Posterior cingulate gyrus (tissue), 11 donors: ENCODE measurements at regions of chr2 and their contacts with region 1.

Region 1: DNA sequence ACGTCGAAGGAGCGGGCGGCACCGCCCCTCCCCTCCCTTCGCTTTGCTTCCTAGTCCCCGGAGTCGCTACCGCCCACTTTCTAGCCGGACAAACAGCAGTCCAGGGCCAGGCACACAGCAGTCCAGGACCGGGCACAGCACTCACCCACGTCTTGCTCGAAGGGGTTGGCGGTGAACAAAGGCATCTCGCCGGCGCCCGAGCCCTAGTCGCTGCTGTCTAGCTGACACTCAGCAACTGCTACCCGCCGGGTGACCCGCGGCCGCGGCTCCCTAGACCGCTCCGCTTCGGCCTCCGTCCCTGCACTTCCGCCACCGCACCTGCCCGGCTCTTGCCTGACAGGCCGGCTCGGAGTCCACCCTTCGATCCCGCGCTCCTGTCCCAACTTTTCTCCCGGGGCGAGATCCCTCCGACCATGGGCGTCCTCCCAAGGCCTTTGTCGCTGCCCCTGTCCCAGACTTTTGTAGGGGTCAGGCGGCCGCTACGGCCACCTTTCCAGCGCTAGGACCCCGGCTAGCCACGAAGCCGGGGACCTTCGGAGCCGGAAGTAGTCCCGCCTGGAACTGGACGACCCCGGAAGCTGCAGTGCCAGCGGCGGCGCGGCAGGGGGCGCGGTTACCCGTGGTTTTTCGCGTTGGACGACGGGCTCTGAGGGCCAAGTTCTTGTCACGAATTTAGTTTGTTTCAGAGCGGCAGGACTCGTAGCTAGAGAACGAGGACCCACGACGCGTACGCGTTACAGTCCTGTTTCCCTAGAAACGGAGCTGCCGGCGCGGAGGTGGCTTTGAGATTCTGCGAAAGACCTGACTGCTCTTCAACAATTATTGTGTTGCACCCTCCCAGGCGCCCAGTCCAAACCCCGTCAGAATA is at the start of gene STAM2:
- DNase-seq: peak; percentile 82 to 99 (median 91)

Region 2: GRCh38 chr2:152036611-152037469 is 138.9 kb before region 1 on chr2:
- intact Hi-C with region 1: loop called (anchors 1 kb)
- DNase-seq: peak; percentile 29 to 94 (median 74)

Region 3: GRCh38 chr2:152115952-152116351 is 59.7 kb before region 1 on chr2:
- intact Hi-C with region 1: no loop called
- DNase-seq: no peak

Region 4: DNA sequence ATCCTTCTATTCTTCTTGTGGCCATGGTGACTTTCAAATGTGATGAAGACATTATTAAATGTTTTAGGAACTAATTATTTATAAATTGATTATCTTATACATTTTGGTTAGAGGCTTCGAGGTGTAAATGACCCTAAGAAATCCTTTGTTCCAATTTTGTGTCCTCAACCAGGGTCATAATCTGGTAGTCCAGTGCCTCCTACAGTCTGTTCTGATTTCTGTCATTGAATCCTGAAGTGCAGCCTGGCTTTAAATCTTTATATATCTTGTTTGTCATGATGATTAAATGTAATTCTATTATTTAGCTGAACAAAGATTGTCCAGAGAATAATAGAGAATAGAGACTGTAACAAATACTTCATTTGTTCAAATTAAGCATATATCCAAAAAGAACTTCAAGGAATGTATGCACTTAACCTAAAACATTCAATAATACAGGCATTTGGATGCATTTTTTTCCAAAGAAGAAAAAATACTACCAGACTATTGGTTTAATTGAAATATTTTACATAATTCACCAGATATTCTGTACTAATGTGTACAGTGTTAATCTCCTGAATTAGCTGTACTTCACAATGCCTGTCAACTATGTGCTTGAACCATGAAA is 451.8 kb after region 1 on chr2:
- intact Hi-C with region 1: loop called (anchors 5 kb)
- DNase-seq: no peak

Region 5: GRCh38 chr2:152717228-152718075 is 541.8 kb after region 1 on chr2 and contains the start of gene PRPF40A:
- intact Hi-C with region 1: loop called (anchors 1 kb)
- DNase-seq: peak; percentile 99 to 100 (median 99)

Region 6: GRCh38 chr2:152740743-152741328 is 565.1 kb after region 1 on chr2:
- intact Hi-C with region 1: loop called (anchors 5 kb)
- DNase-seq: no peak

Region 7: GRCh38 chr2:153478334-153479261 is 1302.9 kb after region 1 on chr2 and contains the start of gene RPRM:
- intact Hi-C with region 1: loop called (anchors 5 kb)
- DNase-seq: peak; percentile 55 to 96 (median 74)